Activated CD8-positive, alpha-beta T cell treated with anti-CD3 and anti-CD28 coated beads for 36 hours (primary cell): ENCODE measurements at regions of chr19 and their contacts with region 1.

Region 1: DNA sequence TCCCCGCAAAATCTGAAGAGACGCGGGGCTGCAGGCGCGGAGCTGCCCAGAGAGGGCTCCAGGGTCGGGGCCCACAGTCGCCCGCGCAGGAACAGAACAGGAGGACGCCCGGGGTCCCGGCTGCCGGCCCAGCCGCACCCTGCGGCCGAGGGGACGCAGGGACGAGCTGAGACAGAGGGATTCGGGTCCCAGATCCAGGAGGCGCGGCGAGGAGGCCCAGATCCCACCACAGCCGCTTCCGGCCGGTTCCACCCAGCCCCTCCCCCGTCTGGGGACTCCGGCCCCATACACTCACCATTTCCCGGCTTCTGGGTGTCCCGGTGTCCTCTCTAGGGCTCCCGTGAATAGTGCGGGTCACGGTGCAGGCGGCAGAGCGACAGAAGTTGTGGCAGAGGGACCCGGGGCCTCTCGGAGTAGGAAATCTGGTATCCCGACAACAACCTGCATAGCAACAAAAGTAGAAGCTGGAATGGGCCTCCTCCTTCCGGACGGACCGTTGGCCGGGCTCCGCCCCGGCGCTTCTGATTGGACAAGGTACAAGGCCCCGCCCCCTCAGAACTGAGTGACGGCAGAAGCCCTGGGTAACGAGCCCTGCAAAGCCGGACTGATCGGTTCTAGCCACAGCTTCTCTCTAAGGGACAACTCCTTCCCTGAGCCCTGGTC is at the start of gene ZNF20:
- DNase-seq: peak; percentile 97
- ATAC-seq: peak; percentile 94
- H3K4me3 Mint-ChIP-seq: peak within 1 kb of the TSS; percentile 91
- H3K27ac Mint-ChIP-seq: peak within 1 kb of the TSS; percentile 80
- H3K4me1 Mint-ChIP-seq: peaks cover 33% of the 10 kb centered on the region
- H3K27me3 Mint-ChIP-seq: no peaks in the 10 kb centered on the region
- CTCF ChIP-seq: no peak
- total RNA-seq, gene ZNF20: 2.0 to 3.0 TPM

Region 2: GRCh38 chr19:11798391-11799330 is 341.4 kb before region 1 on chr19 and contains the start of gene ZNF491:
- CTCF ChIA-PET with region 1: interaction called, 20 read pairs
- POLR2A ChIA-PET with region 1: no interaction called
- intact Hi-C with region 1: loop called (anchors 5 kb)
- DNase-seq: peak; percentile 97
- ATAC-seq: peak; percentile 98
- H3K4me3 Mint-ChIP-seq: peak within 1 kb of the TSS; percentile 87
- H3K27ac Mint-ChIP-seq: peak within 1 kb of the TSS; percentile 69
- H3K4me1 Mint-ChIP-seq: peaks cover 14% of the 10 kb centered on the region
- H3K27me3 Mint-ChIP-seq: no peaks in the 10 kb centered on the region
- CTCF ChIP-seq: peak; percentile 48
- total RNA-seq, gene ZNF491: 0.76 to 1.4 TPM

Region 3: DNA sequence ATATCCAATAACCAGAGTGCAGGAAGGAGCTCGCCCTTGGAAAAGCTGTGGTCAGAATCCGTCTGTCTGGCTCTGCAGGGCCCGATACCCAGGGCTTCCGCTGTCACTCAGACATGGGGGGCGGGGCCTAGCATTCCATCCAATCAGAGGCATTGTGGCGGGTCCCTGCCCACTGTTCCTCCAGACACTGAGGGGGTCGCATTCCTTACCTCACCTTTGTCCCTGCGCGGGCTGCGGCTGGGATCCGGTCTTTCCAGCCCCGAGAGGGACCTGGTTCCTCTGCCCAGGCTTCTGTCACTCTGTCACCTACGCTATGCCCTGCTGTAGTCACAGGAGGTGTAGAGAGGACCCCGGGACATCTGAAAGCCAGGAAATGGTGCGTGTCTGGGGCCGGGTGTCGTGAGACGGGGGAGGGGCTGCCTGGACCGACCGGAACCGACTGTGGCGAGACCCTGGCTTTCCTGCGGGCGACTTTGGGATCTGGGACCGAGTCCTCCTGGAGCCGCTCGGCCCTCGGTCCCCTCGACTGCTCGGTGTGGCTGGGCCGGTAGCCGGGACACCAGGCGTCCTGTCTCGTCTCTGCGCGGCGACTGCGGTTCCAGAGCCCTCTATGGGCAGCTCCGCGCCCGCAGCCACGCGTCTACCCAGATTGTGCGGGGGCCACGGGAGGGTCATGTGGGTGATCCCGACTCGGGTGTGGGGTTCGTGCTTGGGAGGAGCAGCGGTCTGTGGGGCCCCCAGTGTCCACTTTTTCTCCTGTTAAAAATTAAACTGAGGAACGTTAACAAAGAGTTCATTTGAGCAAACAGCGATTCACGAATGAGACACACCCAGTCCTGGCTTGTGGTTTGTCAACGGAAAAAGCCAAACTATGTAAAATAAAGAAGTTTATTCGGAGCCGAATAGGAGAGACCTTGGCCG is 252.1 kb before region 1 on chr19 and contains the start of gene ZNF69:
- CTCF ChIA-PET with region 1: interaction called, 5 read pairs
- POLR2A ChIA-PET with region 1: interaction called, 3 read pairs
- intact Hi-C with region 1: loop called (anchors 2 kb)
- DNase-seq: peak; percentile 83
- ATAC-seq: peak; percentile 91
- H3K4me3 Mint-ChIP-seq: peak within 1 kb of the TSS; percentile 91
- H3K27ac Mint-ChIP-seq: peak within 1 kb of the TSS; percentile 87
- H3K4me1 Mint-ChIP-seq: peaks cover 21% of the 10 kb centered on the region
- H3K27me3 Mint-ChIP-seq: no peaks in the 10 kb centered on the region
- CTCF ChIP-seq: peak; percentile 20
- total RNA-seq, gene ZNF69: 1.8 to 3.1 TPM

Region 4: GRCh38 chr19:11905928-11906327 is 234.1 kb before region 1 on chr19:
- CTCF ChIA-PET with region 1: no interaction called
- POLR2A ChIA-PET with region 1: no interaction called
- intact Hi-C with region 1: no loop called
- DNase-seq: no peak
- ATAC-seq: no peak
- H3K4me3 Mint-ChIP-seq: no peak overlapping the region
- H3K27ac Mint-ChIP-seq: no peak overlapping the region
- H3K4me1 Mint-ChIP-seq: no peaks in the 10 kb centered on the region
- H3K27me3 Mint-ChIP-seq: no peaks in the 10 kb centered on the region
- CTCF ChIP-seq: no peak

Region 5: DNA sequence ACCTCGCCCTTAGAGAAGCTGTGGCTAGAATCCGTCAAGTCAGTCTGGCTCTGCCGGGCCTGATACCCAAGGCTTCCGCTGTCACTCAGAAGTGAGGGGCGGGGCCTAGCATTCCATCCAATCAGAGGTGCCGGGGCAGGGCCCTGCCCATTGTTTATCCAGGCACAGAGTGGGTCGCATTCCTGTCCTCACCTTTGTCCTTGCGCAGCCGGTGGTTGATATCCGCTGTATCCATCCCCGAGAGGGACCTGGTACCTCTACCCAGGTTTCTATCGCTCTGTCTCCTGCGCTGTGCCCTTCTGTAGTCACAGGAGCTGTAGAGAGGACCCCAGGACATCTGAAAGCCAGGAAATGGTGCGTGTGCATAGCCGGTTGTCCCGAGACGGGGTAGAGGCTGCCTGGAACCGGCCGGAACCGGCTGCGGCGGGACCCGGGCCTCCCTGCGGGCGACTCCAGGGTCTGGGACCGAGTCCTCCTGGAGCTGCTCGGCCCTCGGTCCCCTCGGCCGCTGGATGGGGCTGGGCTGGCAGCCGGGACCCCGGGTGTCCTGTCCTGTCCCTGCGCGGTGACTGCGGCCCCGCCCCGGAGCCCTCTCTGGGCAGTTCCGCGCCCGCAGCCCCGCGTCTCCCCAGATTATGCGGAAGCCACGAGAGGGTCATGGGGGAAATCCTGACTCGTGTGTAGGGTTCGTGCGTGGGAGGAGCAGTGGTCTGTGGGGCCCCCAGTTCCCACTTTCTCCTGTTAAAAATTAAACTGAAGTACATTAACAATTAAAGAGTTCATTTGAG is 175.0 kb before region 1 on chr19 and contains the start of gene ZNF763:
- CTCF ChIA-PET with region 1: interaction called, 18 read pairs
- POLR2A ChIA-PET with region 1: no interaction called
- intact Hi-C with region 1: loop called (anchors 2 kb)
- DNase-seq: peak; percentile 97
- ATAC-seq: peak; percentile 97
- H3K4me3 Mint-ChIP-seq: peak within 1 kb of the TSS; percentile 88
- H3K27ac Mint-ChIP-seq: peak within 1 kb of the TSS; percentile 92
- H3K4me1 Mint-ChIP-seq: peaks cover 24% of the 10 kb centered on the region
- H3K27me3 Mint-ChIP-seq: no peaks in the 10 kb centered on the region
- CTCF ChIP-seq: no peak
- total RNA-seq, gene ZNF763: 0.83 to 1.7 TPM

Region 6: DNA sequence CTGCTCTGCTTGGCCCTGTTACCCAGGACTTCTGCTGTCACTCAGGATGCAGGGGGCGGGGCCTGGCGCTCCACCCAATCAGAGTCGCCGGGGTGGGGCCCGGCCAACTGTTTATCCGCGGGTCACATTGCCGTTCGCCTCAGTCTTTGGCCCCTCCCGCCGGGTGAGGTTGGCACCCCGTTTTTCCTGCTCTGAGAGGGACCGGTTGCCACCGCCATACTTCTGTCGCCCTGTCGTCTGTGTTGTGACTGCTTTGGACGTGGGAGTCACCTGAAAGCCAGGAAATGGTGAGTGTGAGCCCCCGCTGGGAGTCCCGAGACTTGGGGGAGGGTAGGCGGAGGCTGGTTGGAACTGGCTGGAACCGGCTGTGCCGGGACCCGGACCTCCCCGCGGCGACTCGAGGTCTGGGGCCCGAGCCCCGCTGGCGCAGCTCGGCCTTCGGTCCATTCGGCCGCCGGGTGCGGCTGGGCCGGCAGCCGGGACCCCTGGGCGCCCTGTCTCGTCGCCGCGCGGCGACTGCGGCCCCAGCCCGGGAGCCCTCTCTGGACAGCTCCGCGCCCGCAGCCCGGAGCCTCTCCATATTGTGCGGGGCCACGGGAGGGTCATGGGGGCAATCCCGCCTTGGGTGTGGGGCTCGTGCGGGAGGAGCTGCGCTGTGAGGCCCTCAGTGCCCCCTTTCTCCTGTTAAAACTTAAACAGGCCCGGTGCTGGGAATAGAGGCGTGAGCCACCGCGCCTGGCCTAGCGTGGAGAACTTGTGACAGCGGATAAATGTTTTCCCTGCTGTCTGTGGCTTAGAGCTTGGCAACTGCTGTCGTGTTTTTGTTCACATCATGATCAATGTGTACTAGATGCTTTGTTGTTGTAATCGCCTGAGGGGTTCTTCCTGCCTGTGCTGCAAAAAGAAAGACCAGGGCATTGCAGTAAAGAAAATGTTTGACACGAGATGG is 75.2 kb before region 1 on chr19 and contains the start of gene ZNF844:
- CTCF ChIA-PET with region 1: interaction called, 54 read pairs
- POLR2A ChIA-PET with region 1: interaction called, 5 read pairs
- intact Hi-C with region 1: no loop called
- DNase-seq: peak; percentile 89
- ATAC-seq: peak; percentile 93
- H3K4me3 Mint-ChIP-seq: peak within 1 kb of the TSS; percentile 82
- H3K27ac Mint-ChIP-seq: peak within 1 kb of the TSS; percentile 89
- H3K4me1 Mint-ChIP-seq: peaks cover 9% of the 10 kb centered on the region
- H3K27me3 Mint-ChIP-seq: no peaks in the 10 kb centered on the region
- CTCF ChIP-seq: no peak
- total RNA-seq, gene ZNF844: 2.6 to 3.8 TPM

Region 7: DNA sequence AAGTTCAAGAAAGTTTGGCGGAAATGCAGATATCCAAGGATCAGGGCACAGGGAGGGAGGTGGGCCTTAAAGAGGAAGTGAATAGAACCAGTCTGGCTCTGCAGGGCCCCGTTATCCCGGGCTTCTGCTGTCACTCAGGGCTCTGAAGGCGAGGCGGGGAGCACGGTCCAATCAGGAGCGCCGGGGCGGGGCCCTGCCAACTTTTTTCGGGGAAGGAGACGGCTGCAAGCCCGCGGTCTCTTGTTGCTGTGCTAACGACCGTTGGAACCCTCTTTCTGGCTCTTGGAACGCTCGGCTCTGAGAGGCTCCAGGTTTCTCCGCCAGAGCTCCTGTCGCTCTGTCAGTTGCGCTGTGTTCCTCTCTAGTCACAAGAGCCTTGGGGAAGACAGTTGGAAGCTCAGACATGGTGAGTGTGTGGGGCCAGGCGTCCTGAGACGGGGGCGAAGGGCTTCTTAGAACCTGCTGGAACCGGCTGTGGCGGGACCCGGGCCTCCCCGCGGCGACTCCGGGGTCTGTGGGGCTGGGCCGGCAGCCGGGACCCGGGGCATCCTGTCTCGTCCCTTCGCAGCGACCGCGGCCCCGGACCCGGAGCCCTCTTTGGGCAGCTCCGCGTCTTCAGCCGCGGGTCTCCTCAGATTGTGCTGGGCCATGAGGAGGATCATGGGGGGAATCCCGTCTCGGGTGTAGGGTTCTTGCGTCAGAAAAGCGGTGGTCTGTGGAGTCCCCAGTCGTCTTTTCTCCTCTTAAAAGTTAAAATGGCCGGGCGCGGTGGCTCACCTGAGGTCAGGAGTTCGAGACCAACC is 47.8 kb before region 1 on chr19:
- CTCF ChIA-PET with region 1: interaction called, 136 read pairs
- POLR2A ChIA-PET with region 1: interaction called, 4 read pairs
- intact Hi-C with region 1: loop called (anchors 2 kb)
- DNase-seq: peak; percentile 90
- ATAC-seq: peak; percentile 92
- H3K4me3 Mint-ChIP-seq: peak overlapping the region; percentile 83
- H3K27ac Mint-ChIP-seq: peak overlapping the region; percentile 92
- H3K4me1 Mint-ChIP-seq: peaks cover 10% of the 10 kb centered on the region
- H3K27me3 Mint-ChIP-seq: peaks cover 6% of the 10 kb centered on the region
- CTCF ChIP-seq: no peak

Region 8: DNA sequence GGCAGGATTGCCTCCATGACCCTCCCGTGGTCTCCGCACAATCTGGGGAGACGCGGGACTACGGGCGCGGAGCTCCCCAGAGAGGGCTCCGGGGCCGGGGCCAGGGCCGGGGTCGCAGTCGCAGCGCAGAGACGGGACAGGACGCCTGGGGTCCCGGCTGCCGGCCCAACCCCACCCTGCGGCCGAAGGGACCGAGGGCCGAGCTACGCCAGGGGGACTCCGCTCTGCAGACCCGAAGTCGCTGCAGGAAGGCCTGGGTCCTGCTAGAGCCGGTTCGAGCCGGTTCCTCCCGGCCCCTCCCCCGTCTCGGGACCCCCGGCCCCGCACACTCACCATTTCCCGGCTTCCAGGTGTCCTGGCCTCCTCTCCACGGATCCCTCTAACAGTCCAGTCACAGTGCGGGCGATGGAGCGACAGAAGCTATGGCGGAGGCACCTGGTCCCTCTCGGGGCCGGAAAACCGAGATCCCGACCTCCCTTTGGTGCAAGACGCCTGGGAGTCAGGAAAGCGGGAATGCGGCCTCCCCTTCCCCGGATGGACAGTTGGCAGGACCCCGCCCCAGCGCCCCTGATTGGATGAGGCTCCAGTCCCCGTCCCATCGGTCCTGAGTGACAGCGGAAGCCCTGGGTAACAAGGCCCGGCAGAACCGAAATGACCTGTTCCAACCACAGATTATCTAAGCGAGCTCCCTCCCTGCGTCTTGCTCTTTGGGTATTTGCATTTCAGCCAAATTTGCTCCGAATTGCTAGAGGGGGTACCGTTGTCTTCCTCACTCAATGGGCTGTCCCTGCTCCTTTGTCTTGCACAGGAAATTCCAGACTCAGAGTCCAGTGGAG is 16.4 kb after region 1 on chr19 and contains the start of gene ZNF625:
- CTCF ChIA-PET with region 1: interaction called, 17 read pairs
- POLR2A ChIA-PET with region 1: no interaction called
- intact Hi-C with region 1: no loop called
- DNase-seq: peak; percentile 72
- ATAC-seq: peak; percentile 89
- H3K4me3 Mint-ChIP-seq: peak within 1 kb of the TSS; percentile 89
- H3K27ac Mint-ChIP-seq: peak within 1 kb of the TSS; percentile 80
- H3K4me1 Mint-ChIP-seq: peaks cover 15% of the 10 kb centered on the region
- H3K27me3 Mint-ChIP-seq: peaks cover 3% of the 10 kb centered on the region
- CTCF ChIP-seq: no peak
- total RNA-seq, gene ZNF625: 3.9 to 4.6 TPM